ENCODE measurements at regions of chr18 and their contacts with region 1.

Region 1: DNA sequence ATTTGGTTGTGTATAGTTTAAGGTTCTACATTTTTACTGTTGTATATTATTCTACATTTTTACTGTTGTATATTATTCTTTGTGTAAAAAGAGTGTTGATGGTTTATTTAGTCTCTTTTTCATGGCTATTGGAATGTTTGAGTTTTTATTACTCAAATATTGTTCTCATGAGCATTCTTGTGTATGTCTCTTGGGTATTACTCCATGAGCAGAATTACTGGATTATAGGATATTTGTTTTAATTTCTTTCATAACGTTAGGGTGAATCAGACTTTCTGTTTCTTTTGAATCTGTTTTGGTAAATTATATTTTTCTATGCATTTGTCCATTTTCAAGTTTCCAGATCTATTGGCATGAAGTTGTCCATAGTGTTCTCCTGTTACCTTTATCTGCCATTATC is 111.6 kb downstream of the DYNAP start:
- DNase-seq: no peak
- ATAC-seq: no peak
- H3K4me3 ChIP-seq: no peak overlapping the region
- H3K4me3 Mint-ChIP-seq: no peak overlapping the region
- H3K27ac ChIP-seq: no peak overlapping the region
- H3K27ac Mint-ChIP-seq: no peak overlapping the region
- H3K4me1 ChIP-seq: no peaks in the 10 kb centered on the region
- H3K4me1 Mint-ChIP-seq: no peaks in the 10 kb centered on the region
- H3K27me3 ChIP-seq: no peaks in the 10 kb centered on the region
- H3K27me3 Mint-ChIP-seq: no peaks in the 10 kb centered on the region
- CTCF ChIP-seq: no peak

Region 2: DNA sequence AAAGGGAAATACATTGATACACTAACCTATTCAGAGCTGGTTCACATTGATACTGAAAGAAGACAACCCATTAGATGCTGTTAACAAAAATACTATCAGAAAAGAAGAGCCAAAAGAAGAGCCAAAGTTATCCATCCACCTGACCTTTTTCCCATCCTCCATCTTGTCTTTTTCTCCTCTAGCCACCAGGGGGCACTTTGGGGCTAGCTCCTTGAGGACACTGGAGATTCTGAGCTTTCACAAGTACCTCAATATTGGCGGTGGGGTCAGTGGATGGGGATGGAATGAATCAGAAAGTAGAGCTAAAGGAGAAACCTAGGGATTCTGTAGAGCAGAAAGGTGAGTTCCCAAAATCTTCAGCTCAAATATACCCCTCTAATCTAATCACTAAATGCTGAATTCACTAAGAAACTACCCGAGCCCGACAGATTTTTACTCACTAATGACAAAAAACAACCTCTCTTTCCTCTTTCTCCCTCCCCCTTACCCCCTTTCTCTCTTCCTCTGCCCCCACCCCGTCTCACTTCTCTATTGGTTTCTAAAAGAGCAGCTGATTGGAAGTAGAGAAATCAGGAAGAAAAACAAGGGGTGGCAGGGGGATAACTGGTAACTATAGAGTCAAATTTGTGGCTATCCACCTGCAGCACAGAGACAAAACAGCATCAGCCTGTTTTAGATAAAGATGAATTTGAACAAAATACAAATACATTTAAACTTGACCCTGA is 682.0 kb after region 1 on chr18:
- CTCF ChIA-PET with region 1: no interaction called
- POLR2A ChIA-PET with region 1: no interaction called
- intact Hi-C with region 1: loop called in 1 of 2 experiments (anchors 5 kb)
- DNase-seq: peak in 1 of 9 experiments; percentile 9
- ATAC-seq: no peak
- H3K4me3 ChIP-seq: no peak overlapping the region
- H3K4me3 Mint-ChIP-seq: no peak overlapping the region
- H3K27ac ChIP-seq: no peak overlapping the region
- H3K27ac Mint-ChIP-seq: no peak overlapping the region
- H3K4me1 ChIP-seq: no peaks in the 10 kb centered on the region
- H3K4me1 Mint-ChIP-seq: no peaks in the 10 kb centered on the region
- H3K27me3 ChIP-seq: no peaks in the 10 kb centered on the region
- H3K27me3 Mint-ChIP-seq: no peaks in the 10 kb centered on the region
- CTCF ChIP-seq: no peak